CD8-positive, alpha-beta T cell (primary cell): ENCODE measurements at regions of chr13 and their contacts with region 1.

Region 1: DNA sequence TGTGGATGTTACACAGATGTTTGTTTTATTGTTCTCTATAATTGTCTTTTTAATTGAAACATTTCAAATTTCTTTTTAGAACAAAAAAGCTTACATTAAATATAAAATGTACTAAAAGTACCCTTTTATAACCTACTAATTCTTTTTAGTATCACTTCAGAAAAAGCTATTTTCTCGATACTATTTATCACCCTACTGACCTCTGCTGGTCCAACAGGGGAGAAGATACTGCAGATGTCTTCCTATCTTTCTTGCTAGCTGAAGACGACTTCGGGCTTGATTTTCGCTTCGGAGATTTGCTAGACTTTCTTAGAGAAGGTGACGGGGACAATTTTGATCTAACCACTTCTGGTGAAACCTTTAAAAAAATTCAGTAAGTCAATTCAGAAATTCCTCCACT is 42.4 kb downstream of the ZC3H13 start:
- DNase-seq: no peak
- ATAC-seq: no peak
- H3K4me3 ChIP-seq: no peak overlapping the region
- H3K4me3 Mint-ChIP-seq: no peak overlapping the region
- H3K27ac ChIP-seq: no peak overlapping the region
- H3K27ac Mint-ChIP-seq: no peak overlapping the region
- H3K4me1 ChIP-seq: no peaks in the 10 kb centered on the region
- H3K4me1 Mint-ChIP-seq: no peaks in the 10 kb centered on the region
- H3K27me3 ChIP-seq: no peaks in the 10 kb centered on the region
- H3K27me3 Mint-ChIP-seq: no peaks in the 10 kb centered on the region
- CTCF ChIP-seq: no peak

Region 2: DNA sequence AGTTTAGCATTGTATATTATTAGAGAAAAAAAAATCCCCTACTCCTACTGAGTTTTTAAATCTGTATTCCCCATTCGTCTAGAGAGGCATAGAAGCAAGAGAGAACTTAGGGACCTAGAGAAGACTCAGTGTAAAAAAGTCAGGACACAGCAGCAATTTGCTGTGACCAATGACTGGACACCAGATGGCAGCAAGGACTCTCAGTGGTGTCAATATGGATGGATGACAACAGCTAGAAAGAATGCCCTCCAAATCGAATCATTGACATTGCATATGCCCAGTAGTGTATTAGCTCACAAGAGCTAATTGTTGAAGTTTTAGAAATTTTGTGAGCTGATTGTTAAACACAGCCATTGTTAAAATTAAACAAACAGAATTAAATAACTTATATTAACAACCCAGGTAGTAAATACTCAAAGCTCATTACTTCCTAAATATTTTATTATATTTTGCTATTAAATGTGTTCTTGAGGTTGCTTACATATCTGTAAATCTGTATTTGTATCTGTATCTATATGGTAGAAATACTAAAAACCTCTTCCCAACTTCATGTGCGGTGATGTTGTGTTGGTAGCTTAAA is 202.5 kb before region 1 on chr13:
- CTCF ChIA-PET with region 1: no interaction called
- POLR2A ChIA-PET with region 1: no interaction called
- intact Hi-C with region 1: loop called in 1 of 2 experiments (anchors 5 kb)
- DNase-seq: peak in 4 of 9 experiments; percentile 26 to 54 (median 39)
- ATAC-seq: peak; percentile 54
- H3K4me3 ChIP-seq: no peak overlapping the region
- H3K4me3 Mint-ChIP-seq: no peak overlapping the region
- H3K27ac ChIP-seq: no peak overlapping the region
- H3K27ac Mint-ChIP-seq: no peak overlapping the region
- H3K4me1 ChIP-seq: no peaks in the 10 kb centered on the region
- H3K4me1 Mint-ChIP-seq: peaks cover 6% of the 10 kb centered on the region
- H3K27me3 ChIP-seq: no peaks in the 10 kb centered on the region
- H3K27me3 Mint-ChIP-seq: no peaks in the 10 kb centered on the region
- CTCF ChIP-seq: peak; percentile 16

Region 3: GRCh38 chr13:45882626-45883025 is 127.5 kb before region 1 on chr13:
- CTCF ChIA-PET with region 1: no interaction called
- POLR2A ChIA-PET with region 1: no interaction called
- intact Hi-C with region 1: no loop called
- DNase-seq: no peak
- ATAC-seq: no peak
- H3K4me3 ChIP-seq: no peak overlapping the region
- H3K4me3 Mint-ChIP-seq: no peak overlapping the region
- H3K27ac ChIP-seq: no peak overlapping the region
- H3K27ac Mint-ChIP-seq: no peak overlapping the region
- H3K4me1 ChIP-seq: no peaks in the 10 kb centered on the region
- H3K4me1 Mint-ChIP-seq: no peaks in the 10 kb centered on the region
- H3K27me3 ChIP-seq: no peaks in the 10 kb centered on the region
- H3K27me3 Mint-ChIP-seq: peaks cover 7% of the 10 kb centered on the region
- CTCF ChIP-seq: no peak